Left colon (tissue), 2 donors: ENCODE measurements at regions of chr5 and their contacts with region 1.

Region 1: GRCh38 chr5:157253547-157253946 is 12.4 kb upstream of the CYFIP2 start:
- DNase-seq: peak in 1 of 2 donors; percentile 55
- ATAC-seq: peak; percentile 72

Region 2: GRCh38 chr5:156879665-156880285 is 373.8 kb before region 1 on chr5:
- intact Hi-C with region 1: no loop called
- DNase-seq: no peak
- ATAC-seq: no peak

Region 3: DNA sequence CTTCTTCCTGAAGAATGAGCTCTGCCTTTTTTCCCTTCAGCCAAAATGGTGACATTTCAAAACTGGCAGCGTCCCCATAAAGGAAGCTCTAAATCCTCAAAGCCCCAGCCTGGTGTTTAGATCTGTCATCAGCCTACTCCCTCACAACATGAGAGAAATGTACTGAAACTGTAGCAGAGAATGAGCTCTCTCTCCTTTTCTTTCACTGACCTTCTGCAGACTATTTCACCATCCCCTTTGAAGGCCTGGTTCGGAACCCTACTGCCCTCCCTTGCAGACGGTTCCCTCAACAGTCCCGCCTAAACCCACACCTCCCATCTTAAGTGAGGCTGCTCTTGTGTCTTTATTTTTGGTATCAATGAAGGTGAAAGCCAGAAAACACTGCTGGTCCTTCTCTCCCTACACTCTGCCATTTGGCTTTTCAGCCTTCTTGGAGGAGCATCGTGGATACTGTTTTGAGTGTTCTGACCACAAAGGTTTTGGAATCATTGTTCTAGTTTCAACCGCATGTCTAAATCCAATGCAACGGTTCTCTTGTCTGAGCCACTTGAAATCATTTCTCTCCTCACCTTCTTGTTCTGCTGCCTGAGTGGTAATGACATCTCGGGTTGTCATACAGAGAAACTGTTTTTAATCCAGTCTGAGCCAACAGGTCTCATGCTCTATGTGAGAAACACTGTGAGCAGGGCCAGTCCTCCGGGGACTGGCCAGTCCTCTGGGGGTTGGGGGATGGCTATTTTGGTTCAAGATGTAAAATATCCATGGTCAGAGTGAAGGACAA is 33.9 kb before region 1 on chr5:
- intact Hi-C with region 1: no loop called
- DNase-seq: no peak
- ATAC-seq: no peak

Region 4: DNA sequence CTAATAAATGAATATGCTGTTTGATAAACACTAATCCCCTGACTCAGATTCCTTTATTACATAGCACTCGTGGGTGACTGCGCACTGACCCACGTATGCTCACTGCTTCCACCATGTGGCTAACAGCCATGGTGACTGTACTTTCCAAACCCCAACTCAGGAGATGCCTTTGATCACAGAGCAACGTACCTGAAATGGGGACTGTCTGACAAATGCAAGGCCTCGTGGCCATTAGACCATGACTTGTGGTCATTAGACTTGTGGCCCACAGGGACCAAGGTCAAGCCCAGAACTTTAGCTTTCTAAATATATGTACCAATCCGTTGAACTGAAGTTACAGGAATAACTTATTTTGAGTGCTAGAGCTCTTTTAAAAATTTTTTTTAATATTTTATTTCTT is 58.9 kb after region 1 on chr5:
- intact Hi-C with region 1: loop called (anchors 2 to 10 kb)
- DNase-seq: peak in 1 of 2 donors; percentile 37
- ATAC-seq: peak; percentile 95

Region 5: GRCh38 chr5:157697453-157697852 is 443.9 kb after region 1 on chr5:
- intact Hi-C with region 1: no loop called
- DNase-seq: no peak
- ATAC-seq: no peak